ENCODE measurements at regions of chr2 and their contacts with region 1.

Region 1: DNA sequence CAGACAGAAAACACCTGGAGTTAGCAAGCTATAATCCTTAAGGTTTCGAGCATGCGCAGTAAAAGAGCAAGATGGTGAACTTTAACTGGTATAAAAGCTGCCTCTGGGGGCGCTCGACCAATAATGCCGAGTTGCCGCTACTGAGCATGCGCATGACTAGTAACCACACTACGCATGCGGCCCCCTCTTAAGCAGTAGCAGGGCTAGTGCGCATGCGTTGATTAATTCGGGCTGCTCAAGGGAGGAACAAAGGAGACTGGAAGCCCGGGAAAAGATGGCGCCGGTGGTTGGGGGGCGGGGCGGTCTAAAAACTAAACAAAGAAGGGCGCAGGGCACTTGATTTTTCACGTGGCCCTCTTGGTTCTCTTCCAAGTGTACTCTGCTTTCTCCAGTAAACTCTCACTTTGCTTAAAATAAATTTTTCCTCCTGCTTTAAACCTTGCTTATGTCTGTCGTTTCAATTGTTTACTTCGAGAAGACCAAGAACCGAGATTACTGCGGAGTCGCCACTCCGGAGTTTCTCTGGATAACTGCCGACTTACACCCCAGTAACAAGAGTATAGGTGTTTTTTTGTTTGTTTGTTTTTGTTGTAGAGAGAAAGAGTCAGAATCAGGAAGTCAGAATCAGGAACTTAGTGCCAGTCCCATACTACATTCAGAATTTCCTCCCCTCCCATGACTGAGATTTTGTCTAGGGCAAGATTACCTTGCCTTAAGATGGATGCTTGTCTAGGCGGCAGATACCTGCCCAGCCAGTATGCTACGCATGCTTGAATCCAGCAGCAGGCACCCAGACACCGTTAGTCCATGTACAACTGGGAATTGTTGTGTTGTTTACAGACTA is 5.8 kb downstream of the XRCC5 start:
- DNase-seq: peak; percentile 98
- H3K4me3 Mint-ChIP-seq: peak overlapping the region; percentile 86
- H3K27ac Mint-ChIP-seq: peak overlapping the region; percentile 100
- H3K4me1 Mint-ChIP-seq: peaks cover 93% of the 10 kb centered on the region
- H3K27me3 Mint-ChIP-seq: peaks cover 2% of the 10 kb centered on the region

Region 2: GRCh38 chr2:215161301-215161829 is 953.6 kb before region 1 on chr2:
- CTCF ChIA-PET with region 1: no interaction called
- POLR2A ChIA-PET with region 1: no interaction called
- intact Hi-C with region 1: no loop called
- DNase-seq: no peak
- H3K4me3 Mint-ChIP-seq: no peak overlapping the region
- H3K27ac Mint-ChIP-seq: no peak overlapping the region
- H3K4me1 Mint-ChIP-seq: no peaks in the 10 kb centered on the region
- H3K27me3 Mint-ChIP-seq: no peaks in the 10 kb centered on the region

Region 3: GRCh38 chr2:215401896-215402379 is 713.0 kb before region 1 on chr2:
- CTCF ChIA-PET with region 1: no interaction called
- POLR2A ChIA-PET with region 1: no interaction called
- intact Hi-C with region 1: no loop called
- DNase-seq: no peak
- H3K4me3 Mint-ChIP-seq: no peak overlapping the region
- H3K27ac Mint-ChIP-seq: no peak overlapping the region
- H3K4me1 Mint-ChIP-seq: no peaks in the 10 kb centered on the region
- H3K27me3 Mint-ChIP-seq: peaks cover 2% of the 10 kb centered on the region

Region 4: DNA sequence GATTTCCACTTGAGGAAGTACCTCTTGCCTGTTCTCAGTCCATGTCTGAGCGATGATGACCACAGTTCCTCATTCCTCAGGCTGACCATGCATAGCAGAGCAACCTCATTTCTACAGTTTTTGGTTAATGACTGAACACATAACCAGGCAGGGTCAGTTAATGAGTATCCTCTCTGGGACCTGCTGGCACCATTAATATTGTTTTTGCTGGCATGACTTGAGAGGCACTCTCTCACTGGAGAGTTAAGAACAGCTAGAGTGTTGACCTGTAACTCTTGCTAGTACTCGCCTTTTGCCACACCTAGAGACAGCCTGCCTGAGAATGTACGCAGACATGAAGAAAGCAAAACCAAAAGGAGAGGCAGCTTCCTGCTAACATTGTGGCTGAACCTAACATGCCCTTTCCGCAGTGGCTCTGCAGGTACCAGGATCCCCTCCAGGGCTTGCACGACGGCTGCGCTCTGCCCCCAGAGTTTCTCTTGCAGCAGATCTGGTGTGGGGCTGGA is 57.2 kb before region 1 on chr2:
- CTCF ChIA-PET with region 1: interaction called, 9 read pairs
- POLR2A ChIA-PET with region 1: no interaction called
- intact Hi-C with region 1: loop called (anchors 2 kb)
- DNase-seq: peak; percentile 63
- H3K4me3 Mint-ChIP-seq: peak overlapping the region; percentile 71
- H3K27ac Mint-ChIP-seq: peak overlapping the region; percentile 89
- H3K4me1 Mint-ChIP-seq: peaks cover 33% of the 10 kb centered on the region
- H3K27me3 Mint-ChIP-seq: no peaks in the 10 kb centered on the region

Region 5: GRCh38 chr2:216130346-216130971 is 15.5 kb after region 1 on chr2:
- CTCF ChIA-PET with region 1: interaction called, 14 read pairs
- POLR2A ChIA-PET with region 1: interaction called, 4 read pairs
- intact Hi-C with region 1: loop called (anchors 1 kb)
- DNase-seq: no peak
- H3K4me3 Mint-ChIP-seq: no peak overlapping the region
- H3K27ac Mint-ChIP-seq: no peak overlapping the region
- H3K4me1 Mint-ChIP-seq: peaks cover 75% of the 10 kb centered on the region
- H3K27me3 Mint-ChIP-seq: no peaks in the 10 kb centered on the region

Region 6: DNA sequence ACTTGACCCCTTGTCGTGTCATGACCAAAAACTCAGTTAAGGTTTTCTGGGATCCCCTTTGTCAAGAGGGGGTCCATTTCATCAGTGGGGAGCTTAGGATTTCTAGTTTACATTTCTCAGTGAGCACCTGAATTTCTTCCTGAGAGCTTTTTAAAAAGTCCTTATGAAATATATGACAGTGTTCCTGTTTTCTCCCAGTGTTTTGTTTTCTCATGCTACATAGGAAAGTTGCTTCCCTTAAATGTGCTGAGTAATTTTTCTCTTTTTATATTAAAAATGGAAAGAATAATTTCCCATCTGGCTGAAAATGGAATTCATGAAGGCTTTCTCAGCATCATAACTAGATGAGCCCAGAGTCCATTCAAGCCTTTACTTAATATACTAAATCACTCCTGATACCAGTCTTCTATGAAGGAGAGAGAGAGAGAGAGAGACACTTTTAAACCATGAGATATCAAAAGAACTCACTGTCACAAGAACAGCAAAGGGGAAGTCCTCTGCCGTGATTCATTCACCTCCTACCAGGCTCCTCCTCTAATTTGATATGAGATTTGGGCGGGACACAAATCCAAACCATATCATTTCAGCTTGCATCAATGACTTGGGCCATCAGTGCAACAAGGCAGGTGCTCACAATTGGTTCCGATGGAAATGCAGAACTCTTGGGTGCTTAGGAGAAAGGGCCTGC is 55.3 kb after region 1 on chr2:
- CTCF ChIA-PET with region 1: interaction called, 11 read pairs
- POLR2A ChIA-PET with region 1: no interaction called
- intact Hi-C with region 1: no loop called
- DNase-seq: no peak
- H3K4me3 Mint-ChIP-seq: no peak overlapping the region
- H3K27ac Mint-ChIP-seq: peak overlapping the region; percentile 11
- H3K4me1 Mint-ChIP-seq: peaks cover 51% of the 10 kb centered on the region
- H3K27me3 Mint-ChIP-seq: no peaks in the 10 kb centered on the region

Region 7: GRCh38 chr2:216412022-216412999 is 297.4 kb after region 1 on chr2 and contains the start of gene SMARCAL1:
- CTCF ChIA-PET with region 1: interaction called, 4 read pairs
- POLR2A ChIA-PET with region 1: no interaction called
- intact Hi-C with region 1: loop called (anchors 1 kb)
- DNase-seq: peak; percentile 99
- H3K4me3 Mint-ChIP-seq: peak within 1 kb of the TSS; percentile 95
- H3K27ac Mint-ChIP-seq: peak within 1 kb of the TSS; percentile 94
- H3K4me1 Mint-ChIP-seq: peaks cover 8% of the 10 kb centered on the region
- H3K27me3 Mint-ChIP-seq: peaks cover 2% of the 10 kb centered on the region
- total RNA-seq, gene SMARCAL1: 20.8 to 25.2 TPM

Region 8: DNA sequence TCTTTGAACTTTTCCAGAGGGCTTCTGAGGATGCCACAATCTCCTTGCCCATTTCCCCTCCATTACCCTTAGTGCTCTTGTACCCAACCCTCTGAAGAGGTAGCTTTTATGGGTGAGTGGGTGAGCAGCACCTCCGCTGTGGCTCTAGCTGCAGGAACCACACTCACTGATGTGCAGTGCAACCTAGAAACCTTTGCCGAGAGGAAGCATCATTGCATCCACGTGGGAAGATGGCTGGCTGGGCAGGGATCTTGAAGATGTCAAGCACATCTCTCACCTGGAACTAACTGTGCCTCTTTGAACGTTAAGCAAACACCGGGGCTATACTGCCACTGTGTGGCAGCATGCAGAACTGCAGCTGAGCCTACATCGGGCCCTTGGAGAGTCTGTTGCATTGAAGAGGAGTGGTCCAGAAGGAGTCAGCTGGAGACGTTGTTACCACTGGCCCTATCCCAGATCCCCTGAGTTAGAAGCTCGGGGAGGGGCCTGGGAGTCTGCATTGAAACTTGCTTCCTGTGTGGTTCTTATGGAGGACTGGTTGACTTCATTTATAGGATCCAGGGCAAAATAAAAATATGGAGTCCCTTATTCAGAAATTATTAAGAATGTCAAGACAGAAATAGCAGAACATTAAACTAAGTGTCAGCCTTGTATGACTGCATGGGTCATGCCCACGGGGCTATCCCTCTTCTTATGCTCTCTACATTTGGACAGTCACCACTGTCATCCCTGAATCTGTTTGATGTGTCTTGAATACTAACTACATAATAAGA is 551.7 kb after region 1 on chr2:
- CTCF ChIA-PET with region 1: interaction called, 4 read pairs
- POLR2A ChIA-PET with region 1: no interaction called
- intact Hi-C with region 1: loop called (anchors 10 kb)
- DNase-seq: peak; percentile 79
- H3K4me3 Mint-ChIP-seq: no peak overlapping the region
- H3K27ac Mint-ChIP-seq: no peak overlapping the region
- H3K4me1 Mint-ChIP-seq: no peaks in the 10 kb centered on the region
- H3K27me3 Mint-ChIP-seq: peaks cover 3% of the 10 kb centered on the region